Naive thymus-derived CD4-positive, alpha-beta T cell (primary cell): ENCODE measurements at regions of chr7 and their contacts with region 1.

Region 1: GRCh38 chr7:148962823-148963582 is 65.3 kb downstream of the PDIA4 start:
- DNase-seq: peak in 8 of 9 donors; percentile 45 to 80 (median 72)
- ATAC-seq: peak; percentile 61
- H3K4me3 ChIP-seq: peak overlapping the region; percentile 72
- H3K4me3 Mint-ChIP-seq: peak overlapping the region; percentile 78 to 98 (median 93)
- H3K27ac ChIP-seq: peak overlapping the region; percentile 66
- H3K27ac Mint-ChIP-seq: peak overlapping the region; percentile 86 to 95 (median 93)
- H3K4me1 ChIP-seq: peaks cover 0 to 7% of the 10 kb centered on the region in 2 donors
- H3K4me1 Mint-ChIP-seq: peaks cover 11 to 33% (median 25%) of the 10 kb centered on the region in 7 donors
- H3K27me3 ChIP-seq: no peaks in the 10 kb centered on the region
- H3K27me3 Mint-ChIP-seq: peaks cover 0 to 3% (median 0%) of the 10 kb centered on the region in 5 donors

Region 2: GRCh38 chr7:148527707-148528168 is 435.3 kb before region 1 on chr7:
- CTCF ChIA-PET with region 1: no interaction called
- POLR2A ChIA-PET with region 1: no interaction called
- intact Hi-C with region 1: loop called (anchors 1 kb)
- DNase-seq: peak; percentile 63 to 81 (median 77)
- ATAC-seq: peak; percentile 100
- H3K4me3 ChIP-seq: no peak overlapping the region
- H3K4me3 Mint-ChIP-seq: no peak overlapping the region
- H3K27ac ChIP-seq: no peak overlapping the region
- H3K27ac Mint-ChIP-seq: no peak overlapping the region
- H3K4me1 ChIP-seq: no peaks in the 10 kb centered on the region
- H3K4me1 Mint-ChIP-seq: peaks cover 0 to 5% (median 0%) of the 10 kb centered on the region in 7 donors
- H3K27me3 ChIP-seq: no peaks in the 10 kb centered on the region
- H3K27me3 Mint-ChIP-seq: peaks cover 17 to 45% (median 30%) of the 10 kb centered on the region in 5 donors

Region 3: DNA sequence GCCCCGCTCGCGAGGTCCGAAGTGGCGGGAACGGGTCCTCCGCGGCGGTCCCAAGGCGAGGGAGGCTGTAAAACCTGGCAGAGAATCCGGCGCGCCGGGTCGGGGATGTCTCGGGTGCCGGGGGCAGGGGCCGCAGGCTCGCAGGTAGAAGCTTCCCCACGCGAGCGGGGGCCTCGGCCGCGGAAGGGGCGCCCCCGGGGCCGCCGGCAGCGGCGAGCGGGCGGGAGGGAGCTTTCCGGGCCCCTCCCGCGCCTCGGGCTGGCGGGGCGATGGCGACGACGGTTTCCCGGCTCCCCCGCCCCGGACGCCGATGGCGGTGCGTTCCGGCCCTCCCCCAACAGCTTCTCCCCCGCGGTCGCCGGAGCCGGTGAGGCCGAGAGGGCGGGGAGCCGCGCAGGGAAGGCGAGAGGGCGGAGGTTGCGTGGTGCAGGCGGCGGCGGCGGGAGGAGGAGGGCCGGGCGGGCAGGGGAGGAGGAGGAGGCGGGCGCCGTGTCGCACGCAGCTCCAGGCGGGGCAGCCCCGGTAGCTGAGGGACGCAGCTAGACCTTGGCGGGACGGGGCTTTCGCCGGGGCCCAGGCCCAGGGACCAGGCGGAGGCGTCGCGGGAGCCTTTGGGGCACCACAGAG is 264.5 kb before region 1 on chr7 and contains the start of gene CUL1:
- CTCF ChIA-PET with region 1: interaction called, 3 read pairs
- POLR2A ChIA-PET with region 1: interaction called, 3 read pairs
- intact Hi-C with region 1: loop called (anchors 1 to 2 kb)
- DNase-seq: peak; percentile 74 to 85 (median 81)
- ATAC-seq: peak; percentile 89
- H3K4me3 ChIP-seq: peak within 1 kb of the TSS; percentile 80
- H3K4me3 Mint-ChIP-seq: peak within 1 kb of the TSS; percentile 85 to 99 (median 93)
- H3K27ac ChIP-seq: peak within 1 kb of the TSS; percentile 93
- H3K27ac Mint-ChIP-seq: peak within 1 kb of the TSS; percentile 87 to 99 (median 93)
- H3K4me1 ChIP-seq: peaks cover 27 to 29% of the 10 kb centered on the region in 2 donors
- H3K4me1 Mint-ChIP-seq: peaks cover 41 to 53% (median 52%) of the 10 kb centered on the region in 7 donors
- H3K27me3 ChIP-seq: no peaks in the 10 kb centered on the region
- H3K27me3 Mint-ChIP-seq: no peaks in the 10 kb centered on the region
- total RNA-seq, gene CUL1: 39.0 to 68.7 (median 53.6) TPM

Region 4: GRCh38 chr7:148809856-148810255 is 153.1 kb before region 1 on chr7:
- CTCF ChIA-PET with region 1: interaction called, 3 read pairs
- POLR2A ChIA-PET with region 1: no interaction called
- intact Hi-C with region 1: loop called in 1 of 2 experiments (anchors 5 kb)
- DNase-seq: no peak
- ATAC-seq: no peak
- H3K4me3 ChIP-seq: no peak overlapping the region
- H3K4me3 Mint-ChIP-seq: no peak overlapping the region
- H3K27ac ChIP-seq: no peak overlapping the region
- H3K27ac Mint-ChIP-seq: peak overlapping the region in 4 of 9 donors; percentile 0 to 53 (median 40)
- H3K4me1 ChIP-seq: no peaks in the 10 kb centered on the region
- H3K4me1 Mint-ChIP-seq: peaks cover 0 to 23% (median 12%) of the 10 kb centered on the region in 7 donors
- H3K27me3 ChIP-seq: no peaks in the 10 kb centered on the region
- H3K27me3 Mint-ChIP-seq: no peaks in the 10 kb centered on the region

Region 5: GRCh38 chr7:148940702-148941597 is 22.1 kb before region 1 on chr7:
- CTCF ChIA-PET with region 1: interaction called, 17 read pairs
- POLR2A ChIA-PET with region 1: interaction called, 12 read pairs
- intact Hi-C with region 1: loop called (anchors 1 kb)
- DNase-seq: peak; percentile 45 to 86 (median 76)
- ATAC-seq: peak; percentile 88
- H3K4me3 ChIP-seq: peak overlapping the region; percentile 95
- H3K4me3 Mint-ChIP-seq: peak overlapping the region; percentile 86 to 99 (median 96)
- H3K27ac ChIP-seq: peak overlapping the region; percentile 88
- H3K27ac Mint-ChIP-seq: peak overlapping the region; percentile 94 to 99 (median 98)
- H3K4me1 ChIP-seq: peaks cover 7 to 12% of the 10 kb centered on the region in 2 donors
- H3K4me1 Mint-ChIP-seq: peaks cover 8 to 25% (median 20%) of the 10 kb centered on the region in 7 donors
- H3K27me3 ChIP-seq: no peaks in the 10 kb centered on the region
- H3K27me3 Mint-ChIP-seq: no peaks in the 10 kb centered on the region